Transverse colon (tissue), 4 donors: ENCODE measurements at regions of chr14 and their contacts with region 1.

Region 1: GRCh38 chr14:101635749-101636560 is 74.7 kb downstream of the DIO3 start:
- DNase-seq: no peak
- H3K4me3 ChIP-seq: no peak overlapping the region
- H3K27ac ChIP-seq: no peak overlapping the region
- H3K4me1 ChIP-seq: no peaks in the 10 kb centered on the region
- H3K27me3 ChIP-seq: peaks cover 19% of the 10 kb centered on the region
- CTCF ChIP-seq: no peak
- EP300 ChIP-seq: no peak
- POLR2A ChIP-seq: no peak

Region 2: DNA sequence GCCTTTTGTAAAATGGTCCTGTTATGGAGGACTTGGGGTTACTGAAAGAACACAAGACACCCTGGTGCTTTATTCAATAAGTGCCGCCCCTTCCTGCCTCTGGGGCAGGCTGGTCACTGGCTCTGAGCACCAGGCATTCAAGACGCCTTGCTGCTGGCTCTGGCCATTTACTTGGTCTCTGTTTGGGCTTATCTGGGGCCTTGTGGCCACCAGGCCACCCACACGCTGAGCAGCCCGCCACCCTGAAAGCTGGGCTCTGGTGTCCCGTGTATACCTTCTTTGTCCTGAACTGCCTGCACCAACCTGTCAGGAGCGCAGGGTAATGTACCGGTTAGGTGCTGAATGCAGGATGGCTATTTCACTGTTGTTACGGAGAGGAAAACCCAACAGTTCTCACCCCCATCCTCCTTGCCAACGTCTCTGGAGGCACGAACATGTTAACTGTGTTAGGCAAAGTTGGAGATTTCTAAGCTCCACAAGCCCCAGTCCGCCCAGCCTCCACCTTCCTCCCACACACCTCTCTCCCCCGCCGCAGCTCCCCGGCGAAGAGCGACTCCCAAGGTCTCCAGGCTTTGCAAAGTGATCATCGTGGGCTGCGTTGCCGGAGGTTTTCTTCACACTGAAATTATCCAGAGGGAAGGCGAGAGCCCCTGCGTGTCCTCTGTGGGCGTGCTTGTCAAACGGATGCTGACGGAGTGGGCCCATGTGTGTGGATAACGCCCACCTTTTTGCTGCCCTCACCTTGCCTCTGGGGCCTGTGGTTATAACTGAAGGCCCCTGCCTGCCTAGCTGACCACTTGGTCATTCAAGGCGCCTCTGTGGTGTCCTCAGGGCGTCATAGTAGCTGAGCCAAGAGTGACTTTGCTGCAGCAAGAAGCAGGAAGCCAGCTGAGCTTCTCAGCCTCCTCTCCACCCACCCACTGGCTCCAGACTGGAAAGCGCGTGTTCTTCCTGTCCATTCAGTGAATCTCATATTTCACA is 1030.0 kb before region 1 on chr14:
- in situ Hi-C with region 1: no loop called
- intact Hi-C with region 1: no loop called
- DNase-seq: no peak
- H3K4me3 ChIP-seq: no peak overlapping the region
- H3K27ac ChIP-seq: no peak overlapping the region
- H3K4me1 ChIP-seq: no peaks in the 10 kb centered on the region
- H3K27me3 ChIP-seq: no peaks in the 10 kb centered on the region
- CTCF ChIP-seq: no peak
- EP300 ChIP-seq: no peak
- POLR2A ChIP-seq: no peak

Region 3: GRCh38 chr14:100662879-100663760 is 972.8 kb before region 1 on chr14:
- in situ Hi-C with region 1: no loop called
- intact Hi-C with region 1: loop called (anchors 5 kb)
- DNase-seq: peak; percentile 75
- H3K4me3 ChIP-seq: no peak overlapping the region
- H3K27ac ChIP-seq: peak overlapping the region in 2 of 4 donors; percentile 4 to 43
- H3K4me1 ChIP-seq: peaks cover 3 to 24% (median 20%) of the 10 kb centered on the region in 4 donors
- H3K27me3 ChIP-seq: no peaks in the 10 kb centered on the region
- CTCF ChIP-seq: peak; percentile 91 to 97 (median 93)
- EP300 ChIP-seq: no peak
- POLR2A ChIP-seq: no peak

Region 4: GRCh38 chr14:100850841-100851585 is 784.9 kb before region 1 on chr14:
- in situ Hi-C with region 1: loop called in 3 of 4 experiments (anchors 10 to 25 kb)
- intact Hi-C with region 1: no loop called
- DNase-seq: peak; percentile 92
- H3K4me3 ChIP-seq: no peak overlapping the region
- H3K27ac ChIP-seq: no peak overlapping the region
- H3K4me1 ChIP-seq: peaks cover 0 to 8% (median 0%) of the 10 kb centered on the region in 4 donors
- H3K27me3 ChIP-seq: no peaks in the 10 kb centered on the region
- CTCF ChIP-seq: peak; percentile 82 to 94 (median 91)
- EP300 ChIP-seq: no peak
- POLR2A ChIP-seq: no peak

Region 5: DNA sequence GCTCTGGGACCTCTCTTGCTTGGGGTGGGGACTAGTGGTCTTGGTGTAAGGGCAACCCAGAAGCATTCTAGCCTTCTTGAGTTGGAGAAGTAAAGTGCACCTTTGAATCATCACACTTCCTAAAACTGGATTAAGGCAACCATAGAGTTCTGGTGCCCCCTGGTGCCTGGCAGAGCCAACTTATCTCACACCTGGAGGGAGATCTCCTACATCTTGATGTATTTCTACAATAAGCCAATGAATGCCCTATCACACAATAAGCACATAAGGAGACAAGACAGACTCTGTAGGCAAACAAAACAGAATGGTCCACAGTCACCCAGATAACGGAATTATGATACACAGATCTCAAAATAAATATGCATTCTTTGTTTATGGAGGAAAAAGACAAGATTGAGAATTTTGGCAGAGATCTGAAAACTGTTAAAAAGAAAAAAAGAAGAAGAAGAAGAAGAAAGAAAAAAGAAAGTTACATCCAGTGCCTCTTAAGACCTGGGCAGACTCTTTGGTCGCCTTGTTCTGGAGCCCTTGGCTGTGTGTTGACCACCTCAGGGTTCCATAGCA is 29.6 kb after region 1 on chr14:
- in situ Hi-C with region 1: no loop called
- intact Hi-C with region 1: no loop called
- DNase-seq: peak; percentile 52
- H3K4me3 ChIP-seq: no peak overlapping the region
- H3K27ac ChIP-seq: no peak overlapping the region
- H3K4me1 ChIP-seq: no peaks in the 10 kb centered on the region
- H3K27me3 ChIP-seq: peaks cover 41% of the 10 kb centered on the region
- CTCF ChIP-seq: peak; percentile 23 to 56 (median 44)
- EP300 ChIP-seq: no peak
- POLR2A ChIP-seq: no peak

Region 6: GRCh38 chr14:101687756-101688546 is 52.0 kb after region 1 on chr14:
- in situ Hi-C with region 1: no loop called
- intact Hi-C with region 1: loop called (anchors 2 kb)
- DNase-seq: no peak
- H3K4me3 ChIP-seq: no peak overlapping the region
- H3K27ac ChIP-seq: no peak overlapping the region
- H3K4me1 ChIP-seq: no peaks in the 10 kb centered on the region
- H3K27me3 ChIP-seq: peaks cover 28% of the 10 kb centered on the region
- CTCF ChIP-seq: no peak
- EP300 ChIP-seq: no peak
- POLR2A ChIP-seq: no peak